ENCODE measurements at regions of chr9 and their contacts with region 1.

Region 1: GRCh38 chr9:4315582-4316215 is 15.8 kb upstream of the GLIS3 start:
- DNase-seq: peak; percentile 69
- ATAC-seq: peak; percentile 96
- H3K4me3 ChIP-seq: no peak overlapping the region
- H3K27ac ChIP-seq: no peak overlapping the region
- H3K4me1 ChIP-seq: peaks cover 4% of the 10 kb centered on the region; the same call in 1 of the 2 replicates
- H3K27me3 ChIP-seq: peaks cover 2% of the 10 kb centered on the region; the same call in 1 of the 2 replicates
- CTCF ChIP-seq: peak; percentile 93
- POLR2A ChIP-seq: no peak
- RAD21 ChIP-seq: peak; percentile 92

Region 2: GRCh38 chr9:4182831-4183230 is 132.9 kb before region 1 on chr9:
- CTCF ChIA-PET with region 1: no interaction called
- POLR2A ChIA-PET with region 1: no interaction called
- dilution Hi-C with region 1: no loop called
- in situ Hi-C with region 1: no loop called
- intact Hi-C with region 1: no loop called
- DNase-seq: no peak
- ATAC-seq: no peak
- H3K4me3 ChIP-seq: no peak overlapping the region
- H3K27ac ChIP-seq: no peak overlapping the region
- H3K4me1 ChIP-seq: peaks cover 3% of the 10 kb centered on the region; the same call in 1 of the 2 replicates
- H3K27me3 ChIP-seq: no peaks in the 10 kb centered on the region
- CTCF ChIP-seq: no peak
- POLR2A ChIP-seq: no peak
- RAD21 ChIP-seq: no peak

Region 3: DNA sequence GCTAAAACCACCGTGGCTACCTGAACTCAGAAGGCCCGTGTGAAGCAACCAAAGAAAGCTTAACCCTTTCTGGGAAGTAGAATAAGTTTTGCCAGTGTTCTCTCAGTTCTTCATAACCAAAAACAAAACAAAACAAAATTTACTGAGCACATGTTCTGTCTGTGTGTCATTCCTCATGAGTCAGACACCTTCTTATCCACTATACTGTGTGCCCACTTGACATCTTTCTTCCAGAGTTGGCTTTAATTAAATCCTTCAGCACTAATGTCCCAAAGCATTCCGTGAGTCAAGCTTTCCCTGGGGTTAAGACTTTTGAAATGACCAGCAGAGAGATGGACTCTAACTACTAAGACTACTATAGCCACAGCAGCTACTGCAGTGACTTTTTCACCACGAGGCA is 77.2 kb before region 1 on chr9:
- CTCF ChIA-PET with region 1: no interaction called
- POLR2A ChIA-PET with region 1: no interaction called
- dilution Hi-C with region 1: no loop called
- in situ Hi-C with region 1: no loop called
- intact Hi-C with region 1: no loop called
- DNase-seq: peak; percentile 70
- ATAC-seq: peak; percentile 69
- H3K4me3 ChIP-seq: no peak overlapping the region
- H3K27ac ChIP-seq: no peak overlapping the region
- H3K4me1 ChIP-seq: peaks cover 10% of the 10 kb centered on the region
- H3K27me3 ChIP-seq: no peaks in the 10 kb centered on the region
- CTCF ChIP-seq: no peak
- POLR2A ChIP-seq: no peak
- RAD21 ChIP-seq: no peak

Region 4: DNA sequence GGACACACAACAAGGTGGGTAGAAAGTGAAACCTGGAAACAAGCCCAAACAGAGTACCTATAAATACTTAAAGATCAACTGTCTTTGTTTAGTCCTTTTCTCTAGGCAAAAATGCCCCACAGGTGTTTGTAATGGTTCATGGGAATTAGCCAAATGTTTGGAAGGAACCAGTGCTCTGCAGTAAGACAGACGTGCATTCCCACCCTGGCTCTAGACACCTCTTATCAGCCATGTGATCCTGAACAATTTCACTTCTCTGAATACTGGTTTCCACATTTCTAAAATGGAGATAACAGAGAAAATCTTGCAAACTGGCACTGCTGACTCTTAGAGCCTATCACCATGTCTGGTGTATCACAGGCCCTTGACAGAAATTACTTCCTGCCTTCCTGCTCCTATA is 45.8 kb before region 1 on chr9:
- CTCF ChIA-PET with region 1: no interaction called
- POLR2A ChIA-PET with region 1: no interaction called
- dilution Hi-C with region 1: no loop called
- in situ Hi-C with region 1: no loop called
- intact Hi-C with region 1: no loop called
- DNase-seq: no peak
- ATAC-seq: no peak
- H3K4me3 ChIP-seq: no peak overlapping the region
- H3K27ac ChIP-seq: no peak overlapping the region
- H3K4me1 ChIP-seq: no peaks in the 10 kb centered on the region
- H3K27me3 ChIP-seq: no peaks in the 10 kb centered on the region
- CTCF ChIP-seq: no peak
- POLR2A ChIP-seq: no peak
- RAD21 ChIP-seq: no peak

Region 5: GRCh38 chr9:4339357-4339756 is 23.7 kb after region 1 on chr9:
- CTCF ChIA-PET with region 1: interaction called, 8 read pairs
- POLR2A ChIA-PET with region 1: no interaction called
- dilution Hi-C with region 1: no loop called
- in situ Hi-C with region 1: no loop called
- intact Hi-C with region 1: loop called (anchors 1 kb)
- DNase-seq: peak; percentile 82
- ATAC-seq: peak; percentile 83
- H3K4me3 ChIP-seq: no peak overlapping the region
- H3K27ac ChIP-seq: no peak overlapping the region
- H3K4me1 ChIP-seq: no peaks in the 10 kb centered on the region; the same call in 1 of the 2 replicates
- H3K27me3 ChIP-seq: no peaks in the 10 kb centered on the region
- CTCF ChIP-seq: peak; percentile 95
- POLR2A ChIP-seq: no peak
- RAD21 ChIP-seq: peak; percentile 86

Region 6: GRCh38 chr9:4366591-4367330 is 51.1 kb after region 1 on chr9:
- CTCF ChIA-PET with region 1: interaction called, 21 read pairs
- POLR2A ChIA-PET with region 1: no interaction called
- dilution Hi-C with region 1: no loop called
- in situ Hi-C with region 1: no loop called
- intact Hi-C with region 1: loop called (anchors 1 kb)
- DNase-seq: peak; percentile 54
- ATAC-seq: no peak
- H3K4me3 ChIP-seq: no peak overlapping the region
- H3K27ac ChIP-seq: no peak overlapping the region
- H3K4me1 ChIP-seq: no peaks in the 10 kb centered on the region
- H3K27me3 ChIP-seq: peaks cover 2% of the 10 kb centered on the region
- CTCF ChIP-seq: peak; percentile 80
- POLR2A ChIP-seq: no peak
- RAD21 ChIP-seq: peak; percentile 93

Region 7: GRCh38 chr9:4662108-4662988 is 346.6 kb after region 1 on chr9 and contains the start of gene PLPP6:
- CTCF ChIA-PET with region 1: no interaction called
- POLR2A ChIA-PET with region 1: no interaction called
- dilution Hi-C with region 1: no loop called
- in situ Hi-C with region 1: no loop called
- intact Hi-C with region 1: loop called (anchors 10 kb)
- DNase-seq: peak; percentile 75
- ATAC-seq: peak; percentile 88
- H3K4me3 ChIP-seq: peak within 1 kb of the TSS; percentile 91
- H3K27ac ChIP-seq: peak within 1 kb of the TSS; percentile 85
- H3K4me1 ChIP-seq: peaks cover 9% of the 10 kb centered on the region
- H3K27me3 ChIP-seq: no peaks in the 10 kb centered on the region
- CTCF ChIP-seq: peak; percentile 54
- POLR2A ChIP-seq: peak; percentile 56; the same call in 1 of the 2 replicates
- RAD21 ChIP-seq: peak; percentile 42
- total RNA-seq, gene PLPP6: 3.3 and 3.4 TPM in 2 replicates

Region 8: GRCh38 chr9:4774209-4774608 is 458.5 kb after region 1 on chr9:
- CTCF ChIA-PET with region 1: no interaction called
- POLR2A ChIA-PET with region 1: no interaction called
- dilution Hi-C with region 1: no loop called
- in situ Hi-C with region 1: no loop called
- intact Hi-C with region 1: no loop called
- DNase-seq: no peak
- ATAC-seq: no peak
- H3K4me3 ChIP-seq: no peak overlapping the region
- H3K27ac ChIP-seq: no peak overlapping the region
- H3K4me1 ChIP-seq: no peaks in the 10 kb centered on the region
- H3K27me3 ChIP-seq: peaks cover 4% of the 10 kb centered on the region
- CTCF ChIP-seq: no peak
- POLR2A ChIP-seq: no peak
- RAD21 ChIP-seq: no peak

Measured in IMR-90 (cell line).